ENCODE measurements at regions of chr1 and their contacts with region 1.

Region 1: GRCh38 chr1:176880954-176881595 is 283.4 kb downstream of the ASTN1 start:
- DNase-seq: peak in 2 of 3 donors; percentile 62 to 72
- ATAC-seq: peak; percentile 78
- H3K4me3 ChIP-seq: no peak overlapping the region
- H3K4me1 ChIP-seq: no peaks in the 10 kb centered on the region
- CTCF ChIP-seq: peak; percentile 53

Region 2: DNA sequence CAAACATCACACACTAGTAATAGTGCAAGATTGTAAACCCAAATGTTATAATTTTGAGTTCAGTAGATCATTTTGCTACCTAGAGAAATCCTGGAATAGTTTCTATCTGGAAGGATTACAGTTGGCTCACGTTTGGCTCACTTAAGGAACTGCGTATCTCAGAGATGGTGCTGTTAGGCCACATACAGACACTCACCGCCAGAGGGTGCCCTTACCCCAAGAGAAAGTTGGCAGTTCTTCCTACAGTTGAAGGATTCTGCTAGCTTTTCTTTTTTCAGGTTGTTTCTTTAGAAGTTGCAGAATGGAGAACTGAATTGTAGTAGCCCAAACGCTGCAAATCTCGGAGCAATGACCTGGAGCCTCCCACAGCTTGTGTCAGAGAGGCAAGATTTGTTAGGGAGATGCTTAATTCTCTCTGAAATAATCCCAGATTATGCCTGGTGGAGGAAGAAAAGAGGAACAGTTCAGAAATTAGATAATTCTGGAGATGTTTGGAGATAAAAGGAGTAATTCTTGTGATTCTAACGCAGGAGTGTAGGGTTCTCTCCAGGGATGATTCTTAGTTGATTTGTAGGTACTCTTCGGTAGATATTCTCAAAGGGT is 506.0 kb before region 1 on chr1:
- intact Hi-C with region 1: loop called in 1 of 2 experiments (anchors 10 kb)
- DNase-seq: peak in 2 of 3 donors; percentile 74 to 82
- ATAC-seq: peak; percentile 81
- H3K4me3 ChIP-seq: no peak overlapping the region
- H3K4me1 ChIP-seq: no peaks in the 10 kb centered on the region
- CTCF ChIP-seq: peak; percentile 64

Region 3: DNA sequence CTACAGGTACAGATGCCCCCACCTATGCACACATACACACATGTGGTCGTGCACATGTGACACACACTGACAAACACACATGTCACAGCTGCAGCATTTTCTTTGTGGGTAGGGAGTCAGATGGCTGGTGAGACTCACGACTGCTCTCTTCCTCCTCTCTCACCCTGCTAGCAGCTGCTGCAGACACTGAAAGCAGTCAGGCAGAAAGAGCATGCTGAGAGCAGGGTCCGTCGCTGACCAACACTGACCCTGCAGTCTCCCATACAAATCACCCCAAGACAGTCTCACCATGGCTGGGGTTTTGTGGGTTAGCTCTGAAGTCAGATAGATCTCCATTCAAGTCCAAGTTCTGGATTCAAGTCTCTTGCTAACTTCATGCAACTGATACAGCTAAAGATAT is 95.2 kb after region 1 on chr1:
- intact Hi-C with region 1: no loop called
- DNase-seq: no peak
- ATAC-seq: no peak
- H3K4me3 ChIP-seq: no peak overlapping the region
- H3K4me1 ChIP-seq: no peaks in the 10 kb centered on the region
- CTCF ChIP-seq: no peak